ENCODE measurements at regions of chr2 and their contacts with region 1.

Region 1: GRCh38 chr2:172465417-172466334 is 38.3 kb downstream of the ITGA6 start:
- DNase-seq: peak; percentile 51 to 78 (median 66)
- H3K4me3 ChIP-seq: peak overlapping the region; percentile 55
- H3K4me3 Mint-ChIP-seq: peak overlapping the region; percentile 4 to 87 (median 58)
- H3K27ac ChIP-seq: no peak overlapping the region
- H3K27ac Mint-ChIP-seq: peak overlapping the region; percentile 7 to 91 (median 68)
- H3K4me1 ChIP-seq: peaks cover 52% of the 10 kb centered on the region
- H3K4me1 Mint-ChIP-seq: peaks cover 55 to 58% (median 55%) of the 10 kb centered on the region in 3 donors
- H3K27me3 ChIP-seq: no peaks in the 10 kb centered on the region
- H3K27me3 Mint-ChIP-seq: no peaks in the 10 kb centered on the region

Region 2: DNA sequence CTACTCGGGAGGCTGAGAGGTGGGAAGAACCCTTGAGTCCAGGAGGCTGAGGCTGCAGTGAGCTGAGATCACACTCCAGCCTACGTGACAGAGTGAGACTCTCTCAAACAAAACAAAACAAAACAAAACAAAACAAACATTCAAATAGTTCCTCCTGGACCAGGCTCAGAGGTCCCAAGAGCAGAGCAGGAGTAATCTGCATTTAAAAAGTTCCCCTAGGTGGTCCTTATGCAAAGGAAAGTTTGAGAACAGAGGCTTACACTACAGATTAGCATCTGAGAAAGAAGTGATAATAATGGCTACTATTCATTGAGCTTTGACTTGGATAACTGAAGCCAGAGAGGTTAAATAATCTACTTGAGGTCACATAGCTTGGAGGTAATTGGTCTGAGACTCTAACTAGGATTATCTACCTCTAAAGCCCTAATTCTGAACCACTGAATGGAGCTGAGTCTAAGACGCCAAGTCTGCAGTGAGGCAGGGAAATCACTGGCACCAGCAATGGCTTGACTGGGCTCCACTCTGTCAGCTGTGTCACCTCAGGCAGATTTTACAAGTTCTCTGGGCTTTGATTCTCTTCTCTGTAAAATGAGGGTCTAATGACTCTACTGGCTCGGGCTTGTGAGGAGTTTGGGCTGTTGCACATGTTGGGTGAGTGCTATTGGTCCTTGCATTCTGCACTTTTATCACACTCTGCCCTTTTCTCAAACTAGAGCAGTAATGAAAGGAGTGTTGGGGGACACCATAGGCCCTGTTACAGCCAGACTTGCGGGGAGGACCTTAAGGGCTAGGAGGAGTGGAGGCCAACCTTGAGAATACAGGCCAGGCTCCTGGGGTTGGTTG is 333.7 kb before region 1 on chr2:
- CTCF ChIA-PET with region 1: interaction called, 21 read pairs
- POLR2A ChIA-PET with region 1: no interaction called
- DNase-seq: no peak
- H3K4me3 ChIP-seq: no peak overlapping the region
- H3K4me3 Mint-ChIP-seq: peak overlapping the region in 1 of 7 donors; percentile 8
- H3K27ac ChIP-seq: no peak overlapping the region
- H3K27ac Mint-ChIP-seq: no peak overlapping the region
- H3K4me1 ChIP-seq: no peaks in the 10 kb centered on the region
- H3K4me1 Mint-ChIP-seq: no peaks in the 10 kb centered on the region
- H3K27me3 ChIP-seq: no peaks in the 10 kb centered on the region
- H3K27me3 Mint-ChIP-seq: peaks cover 2 to 35% of the 10 kb centered on the region in 2 donors

Region 3: GRCh38 chr2:172427256-172427989 is 38.3 kb before region 1 on chr2 and contains the start of gene ITGA6:
- CTCF ChIA-PET with region 1: interaction called, 582 read pairs
- POLR2A ChIA-PET with region 1: interaction called, 52 read pairs
- DNase-seq: peak; percentile 61 to 84 (median 75)
- H3K4me3 ChIP-seq: peak within 1 kb of the TSS; percentile 70
- H3K4me3 Mint-ChIP-seq: peak within 1 kb of the TSS; percentile 88 to 96 (median 92)
- H3K27ac ChIP-seq: peak within 1 kb of the TSS; percentile 48
- H3K27ac Mint-ChIP-seq: peak within 1 kb of the TSS; percentile 79 to 93 (median 90)
- H3K4me1 ChIP-seq: peaks cover 60% of the 10 kb centered on the region
- H3K4me1 Mint-ChIP-seq: peaks cover 14 to 52% (median 19%) of the 10 kb centered on the region in 3 donors
- H3K27me3 ChIP-seq: no peaks in the 10 kb centered on the region
- H3K27me3 Mint-ChIP-seq: peaks cover 3 to 13% of the 10 kb centered on the region in 2 donors
- total RNA-seq, gene ITGA6: 8.0 to 9.0 TPM

Region 4: DNA sequence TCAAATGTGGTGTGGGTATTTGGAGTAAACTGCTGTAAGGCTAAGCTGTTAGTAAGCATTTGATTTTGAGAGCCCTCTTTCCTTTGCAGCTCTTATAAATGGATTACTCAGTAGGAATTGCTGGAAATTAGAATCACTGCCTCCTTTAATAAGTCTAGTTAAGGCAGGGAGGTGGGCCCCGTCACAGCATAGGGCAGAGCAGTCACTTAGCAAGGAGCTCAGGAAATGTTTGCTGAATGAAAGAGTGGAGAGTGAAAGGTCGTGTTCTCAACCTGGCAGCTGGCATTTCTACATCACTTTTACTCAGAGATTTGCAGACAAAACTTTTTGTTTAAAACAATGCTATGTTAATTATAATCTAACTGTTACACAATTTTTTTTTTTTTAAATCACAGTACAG is 12.8 kb before region 1 on chr2:
- CTCF ChIA-PET with region 1: interaction called, 582 read pairs
- POLR2A ChIA-PET with region 1: no interaction called
- DNase-seq: no peak
- H3K4me3 ChIP-seq: no peak overlapping the region
- H3K4me3 Mint-ChIP-seq: peak overlapping the region in 1 of 7 donors; percentile 54
- H3K27ac ChIP-seq: no peak overlapping the region
- H3K27ac Mint-ChIP-seq: peak overlapping the region in 2 of 8 donors; percentile 51 to 69
- H3K4me1 ChIP-seq: peaks cover 81% of the 10 kb centered on the region
- H3K4me1 Mint-ChIP-seq: peaks cover 60 to 81% (median 73%) of the 10 kb centered on the region in 3 donors
- H3K27me3 ChIP-seq: no peaks in the 10 kb centered on the region
- H3K27me3 Mint-ChIP-seq: no peaks in the 10 kb centered on the region

Region 5: GRCh38 chr2:172516299-172516698 is 50.6 kb after region 1 on chr2:
- CTCF ChIA-PET with region 1: no interaction called
- POLR2A ChIA-PET with region 1: no interaction called
- DNase-seq: no peak
- H3K4me3 ChIP-seq: no peak overlapping the region
- H3K4me3 Mint-ChIP-seq: no peak overlapping the region
- H3K27ac ChIP-seq: no peak overlapping the region
- H3K27ac Mint-ChIP-seq: no peak overlapping the region
- H3K4me1 ChIP-seq: peaks cover 7% of the 10 kb centered on the region
- H3K4me1 Mint-ChIP-seq: peaks cover 0 to 2% (median 1%) of the 10 kb centered on the region in 3 donors
- H3K27me3 ChIP-seq: no peaks in the 10 kb centered on the region
- H3K27me3 Mint-ChIP-seq: peaks cover 0 to 2% of the 10 kb centered on the region in 2 donors

Region 6: DNA sequence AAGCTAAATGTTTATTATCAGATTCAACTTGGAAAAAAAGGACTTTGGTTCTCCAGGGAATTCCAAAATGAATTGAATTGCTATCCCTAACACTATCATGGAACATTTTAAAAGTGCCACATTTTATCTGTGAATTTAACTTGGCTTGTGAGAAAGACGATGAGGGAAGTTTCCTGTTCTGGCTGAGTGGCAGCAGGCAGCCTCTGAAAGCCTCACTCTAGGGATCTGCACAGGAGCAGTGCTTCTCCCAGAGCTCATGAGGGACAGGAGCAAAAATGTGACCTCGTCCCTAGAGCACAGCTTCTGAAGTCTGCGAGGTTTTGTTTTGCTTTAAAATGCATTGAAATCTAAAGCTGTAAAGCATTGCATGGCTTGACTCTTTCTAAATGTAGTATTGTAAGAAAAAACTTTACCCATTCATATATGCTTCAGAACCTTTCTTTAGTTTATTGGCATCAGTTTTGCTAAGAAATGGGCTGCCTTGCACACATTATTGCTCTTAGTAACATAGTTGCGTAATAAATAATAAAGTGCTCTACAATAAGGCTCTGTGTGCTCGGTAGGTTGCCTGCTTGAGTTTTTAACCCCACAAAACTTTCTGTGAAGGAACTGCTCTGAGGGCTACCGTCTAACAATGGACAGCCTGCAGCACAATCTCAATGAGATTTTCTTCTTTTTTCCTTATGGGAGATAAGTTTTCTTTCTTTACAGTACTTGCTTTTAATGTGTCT is 752.8 kb after region 1 on chr2:
- CTCF ChIA-PET with region 1: no interaction called
- POLR2A ChIA-PET with region 1: no interaction called
- DNase-seq: no peak
- H3K4me3 ChIP-seq: no peak overlapping the region
- H3K4me3 Mint-ChIP-seq: no peak overlapping the region
- H3K27ac ChIP-seq: no peak overlapping the region
- H3K27ac Mint-ChIP-seq: no peak overlapping the region
- H3K4me1 ChIP-seq: no peaks in the 10 kb centered on the region
- H3K4me1 Mint-ChIP-seq: peaks cover 4 to 7% (median 5%) of the 10 kb centered on the region in 3 donors
- H3K27me3 ChIP-seq: no peaks in the 10 kb centered on the region
- H3K27me3 Mint-ChIP-seq: no peaks in the 10 kb centered on the region

Measured in CD8-positive, alpha-beta memory T cell (primary cell).